ENCODE measurements at regions of chr6 and their contacts with region 1.

Region 1: GRCh38 chr6:158213925-158214674 is 46.0 kb downstream of the GTF2H5 start:
- DNase-seq: peak; percentile 72 to 77
- H3K4me3 ChIP-seq: no peak overlapping the region
- H3K4me1 ChIP-seq: no peaks in the 10 kb centered on the region
- H3K27me3 ChIP-seq: no peaks in the 10 kb centered on the region

Region 2: GRCh38 chr6:157928428-157928827 is 285.7 kb before region 1 on chr6:
- in situ Hi-C with region 1: no loop called
- DNase-seq: no peak
- H3K4me3 ChIP-seq: no peak overlapping the region
- H3K4me1 ChIP-seq: peaks cover 8% of the 10 kb centered on the region; the same call in 1 of the 2 replicates
- H3K27me3 ChIP-seq: no peaks in the 10 kb centered on the region

Region 3: DNA sequence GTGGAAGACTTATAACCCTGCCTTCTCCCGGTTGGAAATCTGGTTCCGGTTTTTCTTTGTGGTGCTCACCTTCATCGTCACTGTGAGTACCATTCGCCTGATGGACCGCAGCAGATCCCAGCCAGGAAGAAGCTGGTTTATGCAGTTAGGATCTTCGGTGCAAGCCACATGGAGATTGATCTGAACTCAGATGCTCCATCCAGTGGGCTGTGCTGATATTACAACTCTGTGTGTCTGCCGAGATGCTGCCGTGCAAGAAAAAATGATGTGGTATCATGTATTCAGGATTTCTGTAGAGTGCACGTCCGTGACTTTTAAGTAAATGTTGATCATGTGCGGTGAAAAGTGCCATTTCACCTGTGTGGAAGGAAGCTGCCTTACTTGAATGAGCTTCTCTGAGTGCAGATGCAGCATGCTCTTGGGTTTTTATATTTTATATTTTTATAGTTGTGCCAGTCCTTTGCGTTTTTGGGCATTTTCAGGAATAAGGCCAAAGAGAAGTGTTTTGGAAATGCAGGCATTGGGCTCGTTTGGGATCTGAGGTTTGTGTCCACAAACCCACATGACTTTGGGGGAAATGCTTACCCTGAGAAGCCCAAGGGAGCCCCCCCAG is 391.3 kb after region 1 on chr6:
- in situ Hi-C with region 1: loop called (anchors 25 kb)
- DNase-seq: peak; percentile 53 to 79
- H3K4me3 ChIP-seq: no peak overlapping the region
- H3K4me1 ChIP-seq: no peaks in the 10 kb centered on the region
- H3K27me3 ChIP-seq: no peaks in the 10 kb centered on the region

Region 4: DNA sequence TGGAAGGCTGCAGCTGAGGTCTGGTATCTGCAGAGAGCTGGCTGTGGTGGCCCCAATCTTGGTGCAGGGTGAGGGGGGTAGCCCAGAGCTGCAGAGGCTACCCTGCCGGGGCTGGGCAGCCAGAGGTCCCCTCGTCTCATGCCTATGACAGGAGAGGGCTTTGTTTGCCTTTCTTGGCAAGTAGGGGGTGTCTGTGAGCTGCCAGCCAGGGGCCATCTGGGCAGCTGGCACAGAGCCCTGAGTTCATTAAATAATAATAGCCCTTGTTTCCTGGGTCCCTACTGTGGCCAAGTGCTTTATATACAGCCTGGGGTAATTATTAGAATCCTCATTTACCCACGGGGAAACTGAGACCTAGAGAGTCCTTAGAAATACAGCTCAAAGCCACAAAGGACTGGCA is 538.5 kb after region 1 on chr6:
- in situ Hi-C with region 1: no loop called
- DNase-seq: peak in 1 of 2 experiments; percentile 55
- H3K4me3 ChIP-seq: no peak overlapping the region
- H3K4me1 ChIP-seq: no peaks in the 10 kb centered on the region
- H3K27me3 ChIP-seq: no peaks in the 10 kb centered on the region

Measured in HAP-1 (cell line).